ENCODE measurements at regions of chr14 and their contacts with region 1.

Region 1: DNA sequence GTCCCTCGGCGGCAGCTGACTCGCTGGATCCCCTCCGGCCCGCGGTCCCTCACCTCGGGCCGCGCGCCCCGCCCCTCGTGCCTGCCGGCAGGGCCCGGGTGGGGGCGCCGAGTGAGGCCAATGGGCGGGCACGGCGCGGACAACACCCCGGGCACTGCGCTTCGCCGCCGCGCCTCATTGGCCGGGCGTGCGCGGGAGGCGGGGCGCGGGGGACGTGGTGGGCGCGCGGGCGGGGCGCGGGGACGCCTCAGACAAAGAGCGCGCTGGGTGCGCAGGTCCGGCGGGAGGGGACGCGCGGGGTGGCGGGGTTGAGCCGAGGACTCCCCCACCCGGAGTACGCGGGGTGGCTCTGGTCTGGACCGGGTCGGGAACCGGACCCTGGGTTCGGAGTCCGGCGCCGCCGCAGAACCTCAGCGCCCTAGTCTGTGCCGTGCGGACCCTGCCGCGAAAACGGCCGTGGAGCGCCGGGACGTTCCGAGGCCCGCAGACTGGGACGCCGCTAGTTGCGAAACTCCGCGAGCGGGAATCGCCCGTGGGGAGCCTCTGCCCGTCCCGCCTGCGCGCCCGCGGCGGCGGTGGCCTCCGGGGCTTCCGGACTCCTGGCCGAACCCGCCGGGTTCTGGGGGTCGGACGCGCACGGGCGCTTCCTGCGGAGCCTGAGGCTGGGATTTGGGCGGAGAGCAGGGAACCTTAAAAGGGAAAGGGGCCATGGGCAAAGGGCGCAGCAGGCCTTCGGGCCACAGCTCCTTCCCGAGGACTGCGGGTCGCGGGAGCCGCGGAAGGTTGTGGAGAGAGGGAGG is at the start of gene SLC25A29:
- DNase-seq: peak; percentile 86
- ATAC-seq: peak; percentile 93
- H3K4me3 Mint-ChIP-seq: peak within 1 kb of the TSS; percentile 87
- H3K27ac Mint-ChIP-seq: peak within 1 kb of the TSS; percentile 66
- H3K4me1 Mint-ChIP-seq: peaks cover 21% of the 10 kb centered on the region
- H3K27me3 Mint-ChIP-seq: no peaks in the 10 kb centered on the region
- CTCF ChIP-seq: no peak
- total RNA-seq, gene SLC25A29: 20.6 and 28.8 TPM in 2 replicates

Region 2: DNA sequence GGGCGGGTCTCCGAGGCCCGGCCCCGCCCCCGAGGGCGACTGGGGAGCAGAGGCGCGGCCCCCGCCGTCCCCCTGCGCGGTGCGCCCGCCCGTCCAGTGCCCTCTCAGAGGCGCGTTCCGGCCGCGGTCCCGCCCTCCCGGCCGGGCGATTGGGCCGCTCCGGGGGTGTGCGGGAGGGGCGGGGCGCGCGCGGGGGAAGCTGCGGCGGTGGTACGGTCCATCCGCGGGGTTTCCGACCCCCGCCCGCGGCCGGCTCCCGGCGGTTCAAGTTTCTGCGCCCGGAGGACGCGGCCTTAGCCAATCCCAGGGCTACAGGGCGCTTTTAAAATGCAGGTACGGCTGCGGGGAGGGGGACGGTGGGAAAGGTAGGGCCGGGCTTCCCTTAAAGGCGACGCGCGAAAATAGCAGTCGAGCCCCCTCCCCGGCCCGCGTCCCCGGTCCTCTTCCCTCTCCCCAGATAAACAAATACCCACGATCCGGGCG is 702.3 kb before region 1 on chr14:
- CTCF ChIA-PET with region 1: no interaction called
- POLR2A ChIA-PET with region 1: no interaction called
- intact Hi-C with region 1: loop called (anchors 10 kb)
- DNase-seq: peak; percentile 96
- ATAC-seq: peak; percentile 94
- H3K4me3 Mint-ChIP-seq: peak overlapping the region; percentile 88
- H3K27ac Mint-ChIP-seq: peak overlapping the region; percentile 71
- H3K4me1 Mint-ChIP-seq: peaks cover 9% of the 10 kb centered on the region
- H3K27me3 Mint-ChIP-seq: no peaks in the 10 kb centered on the region
- CTCF ChIP-seq: no peak

Region 3: DNA sequence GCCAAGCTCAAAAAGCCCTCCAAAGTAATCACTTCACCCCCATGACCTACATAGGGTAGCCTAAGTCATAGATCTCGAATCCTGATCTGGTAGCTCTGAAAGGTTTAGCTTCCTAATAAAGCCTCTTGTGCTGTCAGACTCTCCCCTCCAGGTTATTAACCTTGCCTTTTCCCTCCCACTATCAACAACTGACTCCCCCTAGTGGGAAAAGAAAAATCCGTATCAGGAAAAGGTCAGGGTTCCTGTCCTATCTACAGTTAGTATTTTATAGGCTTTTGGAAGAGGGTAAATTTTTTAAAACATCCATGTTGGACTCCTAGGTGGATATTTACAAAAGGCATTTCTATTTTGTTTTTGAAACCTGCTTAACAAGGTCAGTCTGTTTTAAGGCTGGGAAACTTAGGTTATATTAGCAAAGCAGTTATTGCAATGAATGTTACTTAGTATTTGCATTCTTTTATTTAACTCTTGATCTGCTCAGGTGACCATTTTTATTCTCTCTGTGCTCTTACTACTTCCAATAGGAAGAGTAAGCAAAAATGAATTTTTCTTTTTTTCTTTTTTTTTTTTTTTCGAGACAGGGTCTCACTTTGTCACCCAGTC is 59.7 kb before region 1 on chr14:
- CTCF ChIA-PET with region 1: no interaction called
- POLR2A ChIA-PET with region 1: interaction called, 12 read pairs
- intact Hi-C with region 1: no loop called
- DNase-seq: no peak
- ATAC-seq: peak; percentile 49
- H3K4me3 Mint-ChIP-seq: peak overlapping the region; percentile 54
- H3K27ac Mint-ChIP-seq: peak overlapping the region; percentile 67
- H3K4me1 Mint-ChIP-seq: peaks cover 79% of the 10 kb centered on the region
- H3K27me3 Mint-ChIP-seq: no peaks in the 10 kb centered on the region
- CTCF ChIP-seq: no peak

Region 4: DNA sequence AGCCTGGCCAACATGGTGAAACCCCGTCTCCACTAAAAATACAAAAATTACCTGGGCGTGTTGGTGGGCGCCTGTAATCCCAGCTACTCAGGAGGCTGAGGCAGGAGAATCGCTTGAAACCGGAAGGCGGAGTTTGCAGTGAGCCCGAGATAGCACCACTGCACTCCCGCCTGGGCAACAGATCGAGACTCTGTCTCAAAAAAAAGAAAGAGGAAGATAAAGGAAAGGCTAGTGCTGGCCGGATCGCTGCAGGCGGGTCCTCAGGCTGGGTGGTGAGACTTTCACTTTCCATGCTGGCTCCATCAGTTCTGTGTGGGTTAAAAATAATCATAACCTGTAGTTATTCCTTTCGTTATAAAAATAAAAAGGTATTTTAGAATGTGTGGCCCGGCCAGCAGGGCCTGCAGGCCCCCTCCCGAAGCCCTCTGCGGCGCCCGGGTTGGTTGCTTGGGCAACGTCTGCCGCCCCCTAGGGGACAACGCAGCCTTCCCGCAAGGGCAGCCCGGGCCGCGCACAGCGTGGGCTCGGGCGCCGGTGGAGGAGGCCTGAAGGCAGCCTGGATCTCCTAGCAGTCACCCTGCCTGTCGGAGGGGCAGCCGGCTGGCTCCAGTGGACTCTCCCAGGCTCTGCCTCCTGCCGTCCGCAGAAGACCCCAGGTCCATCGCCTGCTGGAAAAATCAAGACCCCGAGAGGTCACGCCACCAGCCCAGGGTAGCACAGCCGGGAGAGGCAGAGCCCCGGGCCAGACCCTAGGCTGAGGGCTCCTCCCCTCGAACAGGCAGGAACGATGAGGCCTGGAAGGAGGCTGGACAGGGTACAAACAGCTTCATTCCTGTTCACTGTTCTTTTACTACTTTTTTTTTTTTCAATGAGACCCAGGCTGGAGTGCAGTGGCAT is 11.5 kb after region 1 on chr14:
- CTCF ChIA-PET with region 1: no interaction called
- POLR2A ChIA-PET with region 1: interaction called, 4 read pairs
- intact Hi-C with region 1: loop called (anchors 1 kb)
- DNase-seq: peak; percentile 76
- ATAC-seq: peak; percentile 98
- H3K4me3 Mint-ChIP-seq: peak overlapping the region; percentile 80
- H3K27ac Mint-ChIP-seq: peak overlapping the region; percentile 82
- H3K4me1 Mint-ChIP-seq: peaks cover 3% of the 10 kb centered on the region
- H3K27me3 Mint-ChIP-seq: no peaks in the 10 kb centered on the region
- CTCF ChIP-seq: peak; percentile 78

Region 5: GRCh38 chr14:100341301-100342031 is 34.8 kb after region 1 on chr14:
- CTCF ChIA-PET with region 1: no interaction called
- POLR2A ChIA-PET with region 1: no interaction called
- intact Hi-C with region 1: loop called (anchors 1 kb)
- DNase-seq: no peak
- ATAC-seq: peak; percentile 93
- H3K4me3 Mint-ChIP-seq: peak overlapping the region; percentile 41
- H3K27ac Mint-ChIP-seq: peak overlapping the region; percentile 92
- H3K4me1 Mint-ChIP-seq: peaks cover 32% of the 10 kb centered on the region
- H3K27me3 Mint-ChIP-seq: no peaks in the 10 kb centered on the region
- CTCF ChIP-seq: no peak

Region 6: DNA sequence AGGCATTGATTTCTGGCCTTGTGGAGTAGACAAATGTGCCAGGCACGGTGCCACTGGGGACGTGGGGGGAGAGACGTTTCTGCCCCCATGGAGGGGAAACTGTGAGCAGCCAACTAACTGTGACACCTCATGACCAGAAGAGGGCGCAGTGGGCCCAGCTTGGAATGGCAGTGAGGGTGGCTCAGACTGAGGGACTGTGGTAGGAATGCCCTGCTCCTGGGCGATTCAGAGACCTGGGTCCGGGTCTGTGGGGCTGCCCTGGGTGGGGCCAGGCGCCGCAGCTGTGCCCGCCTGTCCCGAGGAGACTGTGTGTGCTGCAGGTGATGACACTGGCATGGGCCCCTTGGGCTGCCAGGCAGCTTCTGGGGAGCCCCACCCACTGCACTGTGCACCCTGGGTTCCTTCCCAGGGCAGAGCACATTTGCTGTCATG is 77.1 kb after region 1 on chr14:
- CTCF ChIA-PET with region 1: no interaction called
- POLR2A ChIA-PET with region 1: no interaction called
- intact Hi-C with region 1: no loop called
- DNase-seq: peak; percentile 41
- ATAC-seq: peak; percentile 74
- H3K4me3 Mint-ChIP-seq: no peak overlapping the region
- H3K27ac Mint-ChIP-seq: no peak overlapping the region
- H3K4me1 Mint-ChIP-seq: no peaks in the 10 kb centered on the region
- H3K27me3 Mint-ChIP-seq: no peaks in the 10 kb centered on the region
- CTCF ChIP-seq: no peak